ENCODE measurements at regions of chr9 and their contacts with region 1.

Region 1: DNA sequence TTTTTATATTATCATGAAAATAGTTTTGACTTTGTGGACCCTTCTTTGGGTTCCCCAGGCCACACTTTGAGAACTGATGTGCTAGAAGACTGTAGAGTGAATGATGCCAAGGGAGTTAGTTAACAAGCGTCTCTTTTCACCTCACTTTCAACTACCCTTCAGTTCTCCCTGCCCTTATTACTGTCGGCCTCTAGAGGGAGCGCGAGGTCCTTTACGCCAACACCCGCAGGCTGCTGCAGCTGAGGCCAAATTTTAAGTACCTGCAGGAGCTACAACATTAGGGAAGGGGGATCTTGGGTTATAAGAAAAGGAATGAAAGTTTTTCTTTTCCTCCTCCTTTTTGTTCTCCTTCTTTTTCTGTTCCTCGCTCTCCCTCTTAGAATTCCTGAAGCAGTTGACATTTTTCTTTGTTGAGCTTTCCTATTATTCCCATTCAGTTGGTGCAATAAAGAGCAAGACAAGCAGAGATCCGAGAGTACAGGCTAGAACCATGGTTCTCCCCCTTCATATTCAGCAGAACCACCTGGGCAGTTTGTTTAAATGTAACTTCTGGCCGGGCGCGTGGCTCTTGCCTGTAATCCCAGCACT is 84.0 kb downstream of the ZFAND5 start:
- DNase-seq: peak; percentile 59
- H3K4me3 ChIP-seq: no peak overlapping the region
- H3K27ac ChIP-seq: no peak overlapping the region
- H3K4me1 ChIP-seq: no peaks in the 10 kb centered on the region
- CTCF ChIP-seq: peak; percentile 94

Region 2: GRCh38 chr9:72305102-72305546 is 24.1 kb after region 1 on chr9:
- CTCF ChIA-PET with region 1: no interaction called
- POLR2A ChIA-PET with region 1: no interaction called
- intact Hi-C with region 1: no loop called
- DNase-seq: no peak
- H3K4me3 ChIP-seq: no peak overlapping the region
- H3K27ac ChIP-seq: no peak overlapping the region
- H3K4me1 ChIP-seq: no peaks in the 10 kb centered on the region
- CTCF ChIP-seq: no peak

Region 3: DNA sequence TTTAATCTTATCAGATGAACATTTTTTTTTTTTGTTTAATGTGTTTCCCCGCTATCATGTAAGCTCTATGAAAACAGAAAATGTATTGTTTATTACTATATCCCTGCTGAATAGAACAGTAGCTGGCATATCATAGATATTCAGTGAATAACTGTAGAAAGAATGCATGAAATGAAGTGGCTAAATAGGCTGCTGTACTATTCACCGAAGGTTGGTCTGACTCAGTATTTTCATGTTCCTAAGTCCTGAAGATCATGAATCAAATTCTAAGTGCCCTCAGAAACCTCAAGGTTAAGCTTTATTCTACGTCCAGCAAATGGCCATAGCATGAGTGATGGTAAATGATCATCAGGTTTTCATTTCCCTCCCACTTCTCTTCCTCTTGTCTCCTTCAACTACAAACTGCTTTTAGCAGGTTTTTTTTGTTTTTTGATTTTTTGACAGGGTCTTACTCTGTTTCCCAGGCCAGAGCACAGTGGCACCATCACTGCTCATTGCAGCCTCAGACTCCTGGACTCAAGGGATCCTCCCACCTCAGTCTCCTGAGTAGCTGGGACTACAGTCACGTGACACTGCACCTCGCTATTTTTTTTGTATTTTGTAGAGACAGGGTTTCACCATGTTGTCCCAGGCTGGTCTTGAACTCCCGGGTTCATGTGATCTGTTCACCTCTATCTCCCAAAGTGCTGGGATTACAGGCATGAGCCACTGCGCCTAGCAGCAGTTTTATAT is 103.1 kb after region 1 on chr9:
- CTCF ChIA-PET with region 1: no interaction called
- POLR2A ChIA-PET with region 1: no interaction called
- intact Hi-C with region 1: no loop called
- DNase-seq: no peak
- H3K4me3 ChIP-seq: no peak overlapping the region
- H3K27ac ChIP-seq: no peak overlapping the region
- H3K4me1 ChIP-seq: no peaks in the 10 kb centered on the region
- CTCF ChIP-seq: no peak

Region 4: DNA sequence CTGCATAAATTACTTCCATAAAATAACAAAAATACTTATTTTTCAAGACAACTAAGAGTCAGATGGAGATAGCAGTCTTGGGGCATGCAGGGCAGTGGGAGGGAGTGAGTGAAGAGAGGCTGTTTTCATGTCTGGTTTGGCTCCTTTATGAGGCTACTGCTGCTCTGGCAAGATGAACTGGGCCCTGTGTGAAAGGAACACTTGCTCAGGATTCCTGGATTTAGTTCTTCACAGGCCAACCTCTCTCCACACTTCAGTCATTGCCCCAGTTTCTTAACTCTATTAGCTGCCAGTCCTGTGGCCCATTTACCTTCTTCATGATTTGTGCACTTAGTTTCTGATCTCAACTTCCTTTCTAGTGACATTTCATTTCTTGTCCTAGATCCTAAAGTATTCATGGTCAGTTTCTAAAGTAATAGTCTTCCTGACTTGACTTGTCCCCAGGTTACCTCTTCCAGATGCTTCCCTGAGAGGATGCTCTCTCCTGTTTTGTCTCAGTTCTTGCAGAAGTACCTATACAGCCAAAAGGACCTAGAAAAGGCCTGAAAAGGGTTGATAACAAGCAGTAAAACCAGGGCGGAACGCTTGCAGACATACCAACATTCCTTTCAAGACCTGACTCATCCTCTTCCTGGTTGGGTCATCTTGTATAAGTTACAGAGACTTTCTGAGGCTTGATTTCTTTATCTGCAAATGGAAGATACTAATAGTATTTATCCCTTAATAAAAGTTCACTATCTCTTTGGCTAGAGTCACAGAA is 161.0 kb after region 1 on chr9:
- CTCF ChIA-PET with region 1: no interaction called
- POLR2A ChIA-PET with region 1: no interaction called
- intact Hi-C with region 1: no loop called
- DNase-seq: no peak
- H3K4me3 ChIP-seq: no peak overlapping the region
- H3K27ac ChIP-seq: no peak overlapping the region
- H3K4me1 ChIP-seq: no peaks in the 10 kb centered on the region
- CTCF ChIP-seq: no peak

Region 5: GRCh38 chr9:72823971-72824370 is 543.0 kb after region 1 on chr9:
- CTCF ChIA-PET with region 1: no interaction called
- POLR2A ChIA-PET with region 1: no interaction called
- intact Hi-C with region 1: loop called (anchors 5 kb)
- DNase-seq: no peak
- H3K4me3 ChIP-seq: no peak overlapping the region
- H3K27ac ChIP-seq: no peak overlapping the region
- H3K4me1 ChIP-seq: no peaks in the 10 kb centered on the region
- CTCF ChIP-seq: no peak